ENCODE measurements at regions of chr12 and their contacts with region 1.

Region 1: GRCh38 chr12:116123451-116124258 is 153.8 kb downstream of the MED13L start:
- DNase-seq: peak; percentile 84
- H3K4me3 ChIP-seq: peak overlapping the region in 1 of 3 experiments; percentile 33
- H3K27ac ChIP-seq: peak overlapping the region; percentile 16
- H3K4me1 ChIP-seq: peaks cover 41% of the 10 kb centered on the region
- H3K27me3 ChIP-seq: no peaks in the 10 kb centered on the region
- CTCF ChIP-seq: no peak
- POLR2A ChIP-seq: no peak

Region 2: GRCh38 chr12:116066381-116067230 is 57.0 kb before region 1 on chr12:
- CTCF ChIA-PET with region 1: interaction called, 5 read pairs
- POLR2A ChIA-PET with region 1: no interaction called
- dilution Hi-C with region 1: no loop called
- intact Hi-C with region 1: loop called (anchors 5 kb)
- DNase-seq: peak; percentile 46
- H3K4me3 ChIP-seq: no peak overlapping the region
- H3K27ac ChIP-seq: no peak overlapping the region
- H3K4me1 ChIP-seq: peaks cover 3% of the 10 kb centered on the region
- H3K27me3 ChIP-seq: no peaks in the 10 kb centered on the region
- CTCF ChIP-seq: peak; percentile 61 to 80
- POLR2A ChIP-seq: no peak

Region 3: GRCh38 chr12:116135209-116135930 is 11.7 kb after region 1 on chr12:
- CTCF ChIA-PET with region 1: interaction called, 10 read pairs
- POLR2A ChIA-PET with region 1: interaction called, 3 read pairs
- dilution Hi-C with region 1: no loop called
- intact Hi-C with region 1: loop called (anchors 1 kb)
- DNase-seq: peak; percentile 87
- H3K4me3 ChIP-seq: no peak overlapping the region
- H3K27ac ChIP-seq: peak overlapping the region; percentile 32
- H3K4me1 ChIP-seq: peaks cover 31% of the 10 kb centered on the region
- H3K27me3 ChIP-seq: no peaks in the 10 kb centered on the region
- CTCF ChIP-seq: no peak
- POLR2A ChIP-seq: no peak

Region 4: GRCh38 chr12:116142936-116143898 is 19.6 kb after region 1 on chr12:
- CTCF ChIA-PET with region 1: interaction called, 6 read pairs
- POLR2A ChIA-PET with region 1: interaction called, 3 read pairs
- dilution Hi-C with region 1: no loop called
- intact Hi-C with region 1: loop called (anchors 1 kb)
- DNase-seq: peak; percentile 97
- H3K4me3 ChIP-seq: peak overlapping the region in 1 of 3 experiments; percentile 18
- H3K27ac ChIP-seq: peak overlapping the region; percentile 99
- H3K4me1 ChIP-seq: peaks cover 28% of the 10 kb centered on the region
- H3K27me3 ChIP-seq: no peaks in the 10 kb centered on the region
- CTCF ChIP-seq: no peak
- POLR2A ChIP-seq: peak; percentile 25

Region 5: DNA sequence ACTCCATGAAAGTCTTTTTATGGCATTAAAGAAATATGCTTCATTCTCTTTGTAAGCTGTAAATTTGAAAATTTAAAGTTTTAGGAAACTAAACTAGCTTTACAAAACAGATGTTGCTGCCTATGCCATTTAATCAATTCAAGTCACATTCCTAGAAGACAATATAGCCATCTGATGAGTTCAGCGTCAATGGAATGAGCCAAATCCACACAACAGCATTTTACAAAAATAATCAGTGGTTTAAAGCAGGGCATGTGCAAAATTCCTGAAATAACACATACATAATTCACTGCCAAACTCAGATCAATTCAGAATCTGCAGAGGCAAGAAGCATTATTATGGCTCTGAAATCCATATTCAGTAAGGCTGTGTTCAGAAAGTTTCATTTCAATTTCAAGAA is 78.3 kb after region 1 on chr12:
- CTCF ChIA-PET with region 1: no interaction called
- POLR2A ChIA-PET with region 1: interaction called, 14 read pairs
- dilution Hi-C with region 1: no loop called
- intact Hi-C with region 1: no loop called
- DNase-seq: no peak
- H3K4me3 ChIP-seq: no peak overlapping the region
- H3K27ac ChIP-seq: no peak overlapping the region
- H3K4me1 ChIP-seq: no peaks in the 10 kb centered on the region
- H3K27me3 ChIP-seq: no peaks in the 10 kb centered on the region
- CTCF ChIP-seq: no peak
- POLR2A ChIP-seq: no peak